Activated B cell treated with CpG ODN at 0.5 μM for 24 hours (primary cell): ENCODE measurements at regions of chr2 and their contacts with region 1.

Region 1: DNA sequence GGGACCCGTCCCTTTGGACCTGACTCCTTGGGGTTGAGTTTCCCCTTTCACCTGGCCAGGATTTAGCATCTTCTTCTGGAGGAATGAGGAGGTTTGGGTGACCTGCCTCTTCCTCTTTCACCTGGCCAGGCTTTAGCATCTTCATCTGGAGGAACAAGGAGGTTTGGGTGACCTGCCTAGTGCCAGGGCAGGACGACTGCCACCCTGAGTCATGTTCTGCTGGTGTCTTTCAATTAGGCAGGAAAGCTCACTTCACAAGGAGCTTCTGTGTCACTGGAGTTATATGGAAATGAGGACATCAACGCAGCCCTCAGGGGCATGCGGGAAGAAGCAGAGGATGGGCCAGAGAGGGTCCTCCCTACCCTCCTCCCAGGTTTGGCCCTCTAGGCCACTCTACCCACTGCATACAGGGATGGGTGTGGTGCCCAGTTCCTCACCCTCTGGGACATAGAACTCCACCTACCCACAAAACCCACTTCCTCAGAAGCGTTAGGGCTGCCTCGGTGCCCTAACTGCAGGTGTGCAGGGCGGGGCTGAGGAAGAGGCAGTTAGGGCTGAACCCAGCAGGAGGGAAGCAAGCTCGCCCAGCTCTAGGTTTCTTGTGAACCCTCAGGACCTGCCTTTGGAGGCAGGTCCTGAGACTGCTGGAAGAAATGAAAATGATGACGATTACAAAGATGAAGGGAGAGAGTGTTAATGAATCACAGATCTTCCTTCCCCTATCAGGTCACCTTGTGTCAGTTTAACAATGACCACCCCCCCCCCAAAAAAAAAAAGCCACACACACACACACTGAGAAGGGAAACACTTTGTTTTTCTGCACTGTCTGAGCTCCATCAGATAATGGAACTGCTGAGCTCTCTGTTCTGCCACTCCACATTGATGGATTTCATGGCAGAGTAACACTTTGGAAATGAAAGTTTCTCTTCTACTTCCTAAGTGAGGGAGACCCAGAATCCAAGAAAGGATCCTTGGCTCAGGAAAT is 71.0 kb downstream of the ARL4C start:
- DNase-seq: peak; percentile 62
- ATAC-seq: peak; percentile 92
- H3K4me3 Mint-ChIP-seq: peak overlapping the region; percentile 68
- H3K27ac Mint-ChIP-seq: peak overlapping the region; percentile 82
- H3K4me1 Mint-ChIP-seq: peaks cover 83% of the 10 kb centered on the region
- H3K27me3 Mint-ChIP-seq: no peaks in the 10 kb centered on the region
- CTCF ChIP-seq: no peak

Region 2: DNA sequence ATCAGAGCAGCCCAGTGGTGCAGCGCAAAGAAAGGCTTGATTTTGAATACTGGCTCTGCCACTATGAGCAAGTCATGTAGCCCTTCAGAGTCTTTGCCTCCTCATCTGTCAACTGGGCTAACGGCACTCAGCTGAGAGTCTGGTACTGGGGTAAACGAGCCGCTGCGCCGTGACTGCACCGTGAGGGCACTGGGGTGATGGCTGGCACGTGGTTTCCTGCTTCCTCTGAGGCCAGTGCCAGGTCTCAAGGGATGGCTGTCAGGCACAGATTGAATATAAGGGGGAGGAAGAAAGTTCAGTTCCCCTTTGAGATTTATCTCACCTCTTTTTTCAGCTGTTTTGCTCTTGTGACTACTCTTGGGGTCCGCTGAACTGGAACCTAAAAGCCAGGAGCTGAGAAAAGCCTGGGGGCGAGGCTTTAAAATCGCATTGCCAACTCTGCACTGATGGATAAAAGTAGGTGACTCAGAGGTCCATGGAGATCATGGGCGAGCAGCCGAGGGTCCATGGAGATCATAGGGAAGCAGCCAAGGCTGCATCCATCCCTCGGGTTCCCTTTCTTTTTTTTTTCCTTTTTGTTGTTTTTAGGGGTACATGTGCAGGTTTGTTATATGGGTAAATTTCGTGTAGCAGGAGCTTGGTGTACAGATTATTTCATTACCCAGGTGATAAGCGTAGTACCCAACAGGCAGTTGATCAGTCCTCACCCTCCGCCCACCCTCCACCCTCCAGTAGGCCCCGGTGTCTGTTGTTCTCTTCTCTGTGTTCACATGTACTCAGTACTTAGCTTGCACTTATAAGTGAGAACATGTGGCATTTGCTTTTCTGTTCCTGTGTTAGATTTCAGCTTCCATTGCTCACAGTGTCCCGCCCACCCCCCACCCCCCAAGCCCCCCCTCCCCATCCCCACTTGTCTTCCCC is 261.2 kb before region 1 on chr2:
- CTCF ChIA-PET with region 1: interaction called, 7 read pairs
- POLR2A ChIA-PET with region 1: interaction called, 4 read pairs
- intact Hi-C with region 1: loop called (anchors 2 kb)
- DNase-seq: peak; percentile 62
- ATAC-seq: peak; percentile 97
- H3K4me3 Mint-ChIP-seq: peak overlapping the region; percentile 48
- H3K27ac Mint-ChIP-seq: peak overlapping the region; percentile 74
- H3K4me1 Mint-ChIP-seq: peaks cover 54% of the 10 kb centered on the region
- H3K27me3 Mint-ChIP-seq: peaks cover 3% of the 10 kb centered on the region
- CTCF ChIP-seq: no peak

Region 3: DNA sequence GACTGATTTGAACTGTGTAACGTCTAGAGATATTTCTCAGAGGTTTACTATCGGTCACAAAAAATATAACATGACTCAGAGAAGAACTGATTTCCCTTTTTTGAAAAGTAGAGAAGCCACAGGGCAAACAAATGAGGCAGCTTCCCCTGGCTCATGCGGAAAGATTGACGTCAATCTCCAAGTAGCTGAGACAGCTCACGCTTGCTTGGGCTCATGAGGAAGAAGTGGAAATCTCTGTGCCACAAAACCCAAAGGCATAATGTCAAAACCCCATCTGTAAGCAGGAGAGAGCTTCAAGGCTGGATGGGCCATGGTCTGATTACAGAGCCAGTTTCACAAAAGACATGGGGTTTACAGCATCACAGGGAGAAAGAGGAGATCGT is 117.1 kb before region 1 on chr2:
- CTCF ChIA-PET with region 1: no interaction called
- POLR2A ChIA-PET with region 1: interaction called, 8 read pairs
- intact Hi-C with region 1: loop called (anchors 1 kb)
- DNase-seq: peak; percentile 43
- ATAC-seq: peak; percentile 93
- H3K4me3 Mint-ChIP-seq: peak overlapping the region; percentile 50
- H3K27ac Mint-ChIP-seq: peak overlapping the region; percentile 74
- H3K4me1 Mint-ChIP-seq: peaks cover 35% of the 10 kb centered on the region
- H3K27me3 Mint-ChIP-seq: peaks cover 33% of the 10 kb centered on the region
- CTCF ChIP-seq: no peak

Region 4: DNA sequence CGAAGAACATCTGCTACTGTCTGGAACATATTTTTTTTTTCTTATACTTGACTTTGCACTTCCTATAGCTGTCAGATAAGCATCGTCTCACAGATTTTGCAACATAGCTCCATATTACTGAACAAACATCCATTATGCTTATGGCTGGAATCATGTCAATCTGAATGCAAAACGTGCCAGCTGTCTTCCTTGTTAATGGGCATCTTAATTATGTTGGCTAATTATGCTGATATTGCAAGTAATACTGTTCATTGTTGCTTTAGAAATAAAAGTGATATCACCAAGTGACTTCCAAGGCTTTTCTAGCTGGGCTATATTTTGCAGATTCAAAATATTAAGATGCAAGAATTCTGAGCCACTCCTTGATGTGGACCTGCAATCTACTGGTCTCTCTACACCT is 105.8 kb before region 1 on chr2:
- CTCF ChIA-PET with region 1: no interaction called
- POLR2A ChIA-PET with region 1: no interaction called
- intact Hi-C with region 1: no loop called
- DNase-seq: no peak
- ATAC-seq: no peak
- H3K4me3 Mint-ChIP-seq: no peak overlapping the region
- H3K27ac Mint-ChIP-seq: no peak overlapping the region
- H3K4me1 Mint-ChIP-seq: peaks cover 4% of the 10 kb centered on the region
- H3K27me3 Mint-ChIP-seq: peaks cover 12% of the 10 kb centered on the region
- CTCF ChIP-seq: no peak

Region 5: GRCh38 chr2:234437642-234438304 is 11.9 kb after region 1 on chr2:
- CTCF ChIA-PET with region 1: interaction called, 3 read pairs
- POLR2A ChIA-PET with region 1: interaction called, 16 read pairs
- intact Hi-C with region 1: loop called (anchors 1 kb)
- DNase-seq: no peak
- ATAC-seq: no peak
- H3K4me3 Mint-ChIP-seq: no peak overlapping the region
- H3K27ac Mint-ChIP-seq: no peak overlapping the region
- H3K4me1 Mint-ChIP-seq: peaks cover 63% of the 10 kb centered on the region
- H3K27me3 Mint-ChIP-seq: no peaks in the 10 kb centered on the region
- CTCF ChIP-seq: no peak